CD4-positive, alpha-beta memory T cell (primary cell): ENCODE measurements at regions of chr17 and their contacts with region 1.

Region 1: DNA sequence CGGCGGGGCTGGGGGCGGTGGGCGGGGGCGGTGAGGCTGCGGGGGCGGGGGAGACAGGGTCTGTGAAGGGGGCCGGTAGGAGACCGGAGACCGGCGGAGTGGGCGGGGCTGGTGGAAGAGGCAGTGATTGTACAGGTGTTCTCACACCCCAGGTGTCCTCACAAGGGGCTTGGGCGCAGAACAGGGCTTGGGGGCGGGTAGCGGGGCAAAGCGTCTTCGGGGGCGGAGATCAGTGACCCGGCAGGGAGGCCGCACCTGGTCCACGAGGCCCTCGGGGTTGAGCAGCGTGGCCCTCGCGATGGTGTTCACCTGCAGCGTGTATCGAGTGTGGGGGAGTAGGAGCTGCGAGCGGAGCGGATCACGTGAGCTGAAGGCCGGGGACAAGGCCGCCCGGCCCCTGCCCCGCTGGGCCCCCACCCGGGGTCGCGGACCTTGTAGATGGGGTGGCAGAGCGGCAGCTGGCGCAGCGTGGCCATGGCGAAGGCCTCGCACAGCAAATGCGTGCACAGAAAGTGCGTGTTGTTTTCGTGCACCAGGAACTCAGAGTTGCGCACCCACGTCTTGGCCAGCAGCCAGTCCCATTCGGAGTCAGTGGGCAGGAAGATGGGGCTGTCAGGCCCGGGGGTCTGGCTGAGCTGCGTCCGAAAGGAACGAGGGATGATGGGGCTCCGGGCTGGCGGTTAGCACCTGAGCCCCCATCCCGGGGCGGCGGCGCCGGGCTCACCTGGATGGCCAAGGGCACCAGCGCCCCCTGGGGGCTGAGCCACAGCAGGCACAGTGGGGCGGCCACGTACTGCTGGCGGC is 8.5 kb downstream of the ALOXE3 start:
- DNase-seq: peak; percentile 78 to 86 (median 82)
- H3K4me3 ChIP-seq: peak overlapping the region; percentile 66 to 84
- H3K4me3 Mint-ChIP-seq: peak overlapping the region; percentile 42 to 78 (median 72)
- H3K27ac ChIP-seq: no peak overlapping the region
- H3K27ac Mint-ChIP-seq: no peak overlapping the region
- H3K4me1 ChIP-seq: peaks cover 5% of the 10 kb centered on the region
- H3K4me1 Mint-ChIP-seq: peaks cover 0 to 5% (median 2%) of the 10 kb centered on the region in 4 donors
- H3K27me3 ChIP-seq: peaks cover 26% of the 10 kb centered on the region
- H3K27me3 Mint-ChIP-seq: peaks cover 15 to 22% of the 10 kb centered on the region in 2 donors

Region 2: DNA sequence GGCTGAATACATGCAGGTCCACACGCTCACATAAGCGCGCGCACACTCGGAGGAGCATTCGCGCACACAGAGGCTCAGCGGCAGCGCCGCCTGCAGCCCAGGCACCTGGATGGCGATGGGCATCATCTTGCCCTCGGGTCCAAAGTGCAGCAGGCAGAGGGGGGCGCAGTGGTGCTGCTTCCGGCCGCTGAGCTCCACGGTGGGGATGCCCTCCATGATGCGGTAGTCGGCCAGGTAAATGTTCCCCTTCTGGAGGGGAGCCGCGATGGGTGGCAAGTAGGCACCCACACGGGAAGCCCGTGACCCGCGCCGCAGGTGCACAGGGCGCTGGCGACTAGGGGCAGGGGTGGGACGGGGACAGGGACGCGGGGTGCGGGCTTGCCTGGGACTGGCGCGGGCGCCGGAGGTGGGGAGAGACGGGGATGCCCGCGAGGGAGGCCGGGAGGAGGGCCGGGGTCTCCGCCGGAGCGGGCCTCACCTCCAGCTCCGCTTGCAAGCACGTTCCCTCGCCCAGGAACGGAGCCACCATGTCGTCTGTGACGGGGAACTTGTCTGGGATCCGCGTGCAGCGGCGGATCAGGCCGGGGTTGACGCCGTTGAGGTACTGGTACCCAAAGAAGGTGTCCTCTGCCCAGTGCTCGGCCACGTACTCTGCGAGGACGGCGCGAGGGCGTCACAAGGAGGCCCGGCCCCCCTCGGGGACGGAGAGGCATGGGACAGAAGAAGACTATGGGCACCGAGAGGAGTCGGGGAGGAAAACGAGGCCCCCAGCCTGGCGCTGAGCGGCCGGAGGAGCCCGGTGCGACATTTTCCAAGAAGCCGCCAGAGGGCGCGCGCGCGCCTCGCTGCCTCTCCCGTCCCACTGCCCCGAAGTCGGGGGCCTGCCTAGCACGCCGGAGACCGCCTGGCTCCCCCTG is 30.3 kb before region 1 on chr17:
- CTCF ChIA-PET with region 1: interaction called, 18 read pairs
- POLR2A ChIA-PET with region 1: interaction called, 13 read pairs
- intact Hi-C with region 1: loop called (anchors 1 kb)
- DNase-seq: peak; percentile 76 to 84 (median 77)
- H3K4me3 ChIP-seq: peak overlapping the region in 1 of 2 donors; percentile 70
- H3K4me3 Mint-ChIP-seq: peak overlapping the region; percentile 86 to 93 (median 89)
- H3K27ac ChIP-seq: peak overlapping the region; percentile 63
- H3K27ac Mint-ChIP-seq: peak overlapping the region; percentile 46 to 95 (median 86)
- H3K4me1 ChIP-seq: peaks cover 14% of the 10 kb centered on the region
- H3K4me1 Mint-ChIP-seq: peaks cover 7 to 16% (median 12%) of the 10 kb centered on the region in 4 donors
- H3K27me3 ChIP-seq: peaks cover 3% of the 10 kb centered on the region
- H3K27me3 Mint-ChIP-seq: peaks cover 0 to 6% of the 10 kb centered on the region in 2 donors

Region 3: GRCh38 chr17:8125157-8125946 is 15.5 kb after region 1 on chr17:
- CTCF ChIA-PET with region 1: interaction called, 81 read pairs
- POLR2A ChIA-PET with region 1: interaction called, 30 read pairs
- intact Hi-C with region 1: no loop called
- DNase-seq: peak; percentile 83 to 90 (median 87)
- H3K4me3 ChIP-seq: peak overlapping the region; percentile 53 to 68
- H3K4me3 Mint-ChIP-seq: peak overlapping the region; percentile 85 to 99 (median 92)
- H3K27ac ChIP-seq: no peak overlapping the region
- H3K27ac Mint-ChIP-seq: peak overlapping the region; percentile 69 to 100 (median 93)
- H3K4me1 ChIP-seq: peaks cover 63% of the 10 kb centered on the region
- H3K4me1 Mint-ChIP-seq: peaks cover 42 to 62% (median 51%) of the 10 kb centered on the region in 4 donors
- H3K27me3 ChIP-seq: peaks cover 20% of the 10 kb centered on the region
- H3K27me3 Mint-ChIP-seq: peaks cover 10 to 28% of the 10 kb centered on the region in 2 donors

Region 4: DNA sequence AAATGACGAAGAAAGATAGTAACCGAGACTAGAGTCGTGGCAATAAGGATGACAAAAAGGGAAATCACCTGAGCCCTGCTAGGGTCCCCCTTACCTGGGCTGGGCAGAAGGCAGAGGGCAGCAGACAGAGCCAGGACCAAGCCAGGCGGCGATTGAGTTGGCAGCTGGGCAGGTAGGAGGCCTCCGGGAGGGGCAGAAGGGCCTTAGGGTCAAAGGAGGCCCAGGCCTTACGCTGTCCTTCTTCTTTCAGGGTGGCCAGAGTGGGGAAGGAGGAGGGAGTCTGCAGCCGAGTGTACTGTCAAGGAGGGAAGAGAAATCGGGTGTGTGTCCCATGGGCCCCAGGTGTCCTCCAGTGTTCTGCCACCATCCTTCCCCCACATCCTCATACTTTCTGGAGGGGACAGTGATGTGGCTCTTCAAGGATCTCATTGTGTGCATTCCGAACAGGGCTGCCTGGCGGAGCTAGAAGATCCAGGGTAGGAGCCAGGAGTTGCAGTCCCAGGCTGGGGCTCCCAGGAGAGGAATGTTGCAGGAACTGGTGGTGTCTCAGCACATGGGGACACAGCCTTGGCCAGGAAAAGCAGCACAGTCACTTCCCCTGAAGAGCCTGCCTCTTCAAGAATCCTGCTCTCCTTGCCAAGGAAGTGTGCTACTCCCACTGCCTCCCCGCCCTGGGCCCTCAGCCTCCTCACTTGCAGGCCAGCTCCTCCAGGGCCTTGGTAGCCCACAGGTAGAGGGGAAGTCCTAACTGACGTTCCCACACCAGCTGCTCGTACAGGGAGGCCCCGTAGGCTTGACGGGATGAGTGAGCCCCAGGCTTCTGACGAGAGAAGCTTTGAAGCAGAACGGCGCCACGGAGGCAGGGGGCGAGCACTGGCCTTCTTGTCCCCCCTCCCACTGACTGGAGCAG is 124.8 kb after region 1 on chr17:
- CTCF ChIA-PET with region 1: no interaction called
- POLR2A ChIA-PET with region 1: no interaction called
- intact Hi-C with region 1: no loop called
- DNase-seq: no peak
- H3K4me3 ChIP-seq: no peak overlapping the region
- H3K4me3 Mint-ChIP-seq: no peak overlapping the region
- H3K27ac ChIP-seq: no peak overlapping the region
- H3K27ac Mint-ChIP-seq: peak overlapping the region in 4 of 7 donors; percentile 6 to 79 (median 53)
- H3K4me1 ChIP-seq: peaks cover 13% of the 10 kb centered on the region
- H3K4me1 Mint-ChIP-seq: peaks cover 19 to 37% (median 28%) of the 10 kb centered on the region in 4 donors
- H3K27me3 ChIP-seq: no peaks in the 10 kb centered on the region
- H3K27me3 Mint-ChIP-seq: no peaks in the 10 kb centered on the region